ENCODE measurements at regions of chr9 and their contacts with region 1.

Region 1: GRCh38 chr9:131046581-131047202 is 37.7 kb downstream of the LAMC3 start:
- DNase-seq: no peak
- H3K4me3 ChIP-seq: no peak overlapping the region
- H3K27ac ChIP-seq: no peak overlapping the region
- H3K4me1 ChIP-seq: no peaks in the 10 kb centered on the region
- H3K27me3 ChIP-seq: no peaks in the 10 kb centered on the region
- CTCF ChIP-seq: peak; percentile 84 to 90 (median 85)
- POLR2A ChIP-seq: no peak

Region 2: GRCh38 chr9:130689937-130690700 is 356.6 kb before region 1 on chr9:
- intact Hi-C with region 1: no loop called
- DNase-seq: peak in 1 of 2 donors; percentile 95
- H3K4me3 ChIP-seq: peak overlapping the region; percentile 39 to 48
- H3K27ac ChIP-seq: peak overlapping the region; percentile 71
- H3K4me1 ChIP-seq: peaks cover 22% of the 10 kb centered on the region
- H3K27me3 ChIP-seq: no peaks in the 10 kb centered on the region
- CTCF ChIP-seq: no peak
- POLR2A ChIP-seq: peak in 1 of 2 donors; percentile 3

Region 3: DNA sequence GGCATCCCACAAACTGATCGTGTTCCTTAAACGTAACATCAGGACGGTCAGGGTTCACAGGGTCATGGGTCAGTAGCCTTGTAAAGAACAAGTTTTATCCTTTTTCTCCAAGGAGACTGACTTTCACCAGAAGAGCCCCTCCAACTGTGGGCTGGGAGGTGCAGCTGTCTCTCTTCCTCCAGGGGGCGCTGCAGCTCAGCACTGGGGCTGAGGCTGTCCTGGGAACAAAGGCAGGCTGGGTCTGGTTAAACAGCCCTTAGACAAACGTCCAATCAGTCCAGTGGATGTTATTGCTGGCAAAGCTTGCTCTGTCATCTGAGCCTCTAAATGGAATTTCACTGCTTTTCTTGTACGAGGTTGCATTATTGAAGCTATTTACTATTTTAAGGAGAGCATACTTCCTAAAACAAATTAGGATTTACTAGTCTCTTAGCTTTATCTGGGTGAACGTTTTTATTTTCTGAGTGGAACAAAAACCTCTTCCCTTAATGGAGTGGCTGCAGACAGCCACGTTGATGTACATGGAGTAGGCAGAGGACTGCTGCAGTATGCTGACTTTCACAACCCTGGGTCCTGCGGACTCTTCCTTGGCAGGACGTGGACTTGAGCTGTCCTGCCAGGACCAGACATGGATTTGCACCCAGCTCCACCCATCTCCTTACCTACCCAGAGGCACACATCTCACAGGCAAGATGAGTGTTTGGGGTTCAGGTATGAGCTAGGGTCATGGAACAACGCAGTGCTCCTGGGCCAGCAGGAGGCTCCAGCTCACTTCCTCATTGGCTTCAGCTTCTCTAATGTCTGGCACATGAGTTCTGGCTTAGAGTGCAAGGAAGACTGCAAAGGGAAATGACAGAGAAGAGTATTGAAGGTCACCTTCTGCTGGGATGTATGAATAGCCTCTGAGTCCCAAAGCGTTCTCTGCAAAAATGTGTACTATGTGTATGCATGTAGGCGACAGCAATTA is 345.4 kb before region 1 on chr9:
- intact Hi-C with region 1: loop called (anchors 5 kb)
- DNase-seq: no peak
- H3K4me3 ChIP-seq: no peak overlapping the region
- H3K27ac ChIP-seq: peak overlapping the region; percentile 33
- H3K4me1 ChIP-seq: peaks cover 9% of the 10 kb centered on the region
- H3K27me3 ChIP-seq: no peaks in the 10 kb centered on the region
- CTCF ChIP-seq: peak; percentile 69 to 80 (median 78)
- POLR2A ChIP-seq: no peak

Region 4: GRCh38 chr9:130866474-130866965 is 180.2 kb before region 1 on chr9:
- intact Hi-C with region 1: loop called (anchors 10 kb)
- DNase-seq: no peak
- H3K4me3 ChIP-seq: no peak overlapping the region
- H3K27ac ChIP-seq: no peak overlapping the region
- H3K4me1 ChIP-seq: peaks cover 40% of the 10 kb centered on the region
- H3K27me3 ChIP-seq: no peaks in the 10 kb centered on the region
- CTCF ChIP-seq: peak; percentile 61 to 74 (median 67)
- POLR2A ChIP-seq: no peak

Region 5: DNA sequence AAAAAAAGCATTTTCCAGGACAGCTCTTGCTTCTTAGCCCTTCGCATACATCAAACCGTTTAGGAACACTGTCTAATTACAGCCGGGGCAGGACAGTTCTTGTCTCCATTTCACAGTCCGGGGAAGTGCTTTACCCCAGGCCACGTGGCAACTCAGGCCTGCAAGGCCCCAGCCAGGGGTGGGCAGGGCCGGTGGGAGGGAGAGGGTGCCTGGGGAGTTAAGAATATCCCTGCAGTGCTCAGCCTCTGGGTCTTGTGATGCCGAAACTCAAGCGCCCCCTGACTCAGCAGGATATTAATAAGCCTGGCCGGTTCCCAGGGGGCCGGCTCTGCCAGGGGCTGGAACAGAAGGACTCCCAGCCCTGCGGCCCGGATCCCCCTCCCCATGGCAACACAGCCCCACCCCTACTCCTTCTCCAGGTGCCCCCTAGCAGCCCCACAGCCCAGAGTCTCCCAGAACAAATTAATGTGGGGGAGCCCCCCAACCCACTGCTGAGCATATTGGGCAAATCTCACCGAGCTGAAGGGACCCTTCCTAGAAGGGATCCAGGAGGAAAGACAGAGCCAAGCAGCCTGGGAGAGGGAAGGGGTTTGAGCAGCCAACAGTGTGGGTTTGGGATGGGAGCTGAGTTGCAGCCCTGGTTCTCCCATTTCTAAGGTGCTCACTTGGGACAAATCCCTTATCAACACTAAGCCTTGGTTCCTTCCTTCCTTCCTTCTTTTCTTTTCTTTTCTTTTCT is 288.1 kb after region 1 on chr9:
- intact Hi-C with region 1: loop called (anchors 10 kb)
- DNase-seq: no peak
- H3K4me3 ChIP-seq: no peak overlapping the region
- H3K27ac ChIP-seq: no peak overlapping the region
- H3K4me1 ChIP-seq: peaks cover 13% of the 10 kb centered on the region
- H3K27me3 ChIP-seq: no peaks in the 10 kb centered on the region
- CTCF ChIP-seq: no peak
- POLR2A ChIP-seq: no peak

Measured in vagina (tissue), 2 donors.